HepG2 (cell line): ENCODE measurements at regions of chr9 and their contacts with region 1.

Region 1: GRCh38 chr9:87684627-87685219 is 41.2 kb upstream of the CTSL start:
- DNase-seq: peak; percentile 19
- ATAC-seq: peak; percentile 85
- H3K4me3 ChIP-seq: no peak overlapping the region
- H3K27ac ChIP-seq: no peak overlapping the region
- H3K4me1 ChIP-seq: no peaks in the 10 kb centered on the region
- H3K27me3 ChIP-seq: no peaks in the 10 kb centered on the region
- CTCF ChIP-seq: peak; percentile 74
- EP300 ChIP-seq: no peak
- POLR2A ChIP-seq: no peak
- RAD21 ChIP-seq: 0 out of 2 replicates have a peak, but pooled peaks have one; percentile 37

Region 2: DNA sequence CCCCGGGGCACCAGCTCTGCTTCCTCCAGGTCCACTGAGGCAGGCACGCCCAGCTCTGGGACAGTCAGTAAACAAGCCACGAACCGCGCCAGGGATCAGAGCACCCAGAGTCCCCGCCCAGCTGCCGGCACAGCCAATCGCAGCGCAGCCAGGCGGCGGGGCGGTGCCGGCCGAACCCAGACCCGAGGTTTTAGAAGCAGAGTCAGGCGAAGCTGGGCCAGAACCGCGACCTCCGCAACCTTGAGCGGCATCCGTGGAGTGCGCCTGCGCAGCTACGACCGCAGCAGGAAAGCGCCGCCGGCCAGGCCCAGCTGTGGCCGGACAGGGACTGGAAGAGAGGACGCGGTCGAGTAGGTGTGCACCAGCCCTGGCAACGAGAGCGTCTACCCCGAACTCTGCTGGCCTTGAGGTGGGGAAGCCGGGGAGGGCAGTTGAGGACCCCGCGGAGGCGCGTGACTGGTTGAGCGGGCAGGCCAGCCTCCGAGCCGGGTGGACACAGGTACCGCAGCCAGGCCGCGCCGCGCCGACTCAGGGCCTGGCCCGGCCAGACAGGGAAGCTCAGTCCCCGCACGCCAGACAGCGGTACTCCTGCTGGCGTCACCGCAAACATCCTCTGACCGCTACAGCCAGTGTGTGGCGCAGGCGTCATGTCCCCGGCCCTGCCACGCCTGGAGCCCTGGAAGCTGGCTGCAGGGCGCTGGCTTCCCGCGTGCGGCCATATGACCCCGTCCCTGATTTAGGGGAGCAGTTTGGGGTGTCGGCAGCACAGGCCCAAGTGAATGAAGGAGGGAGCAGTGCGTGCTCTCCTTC is 41.4 kb after region 1 on chr9 and contains the start of gene CTSL:
- CTCF ChIA-PET with region 1: interaction called, 3 read pairs
- POLR2A ChIA-PET with region 1: no interaction called
- in situ Hi-C with region 1: no loop called
- intact Hi-C with region 1: loop called (anchors 5 kb)
- DNase-seq: peak; percentile 76
- ATAC-seq: peak; percentile 95
- H3K4me3 ChIP-seq: peak within 1 kb of the TSS; percentile 45 to 76 (median 70)
- H3K27ac ChIP-seq: peak within 1 kb of the TSS; percentile 52
- H3K4me1 ChIP-seq: peaks cover 14% of the 10 kb centered on the region
- H3K27me3 ChIP-seq: peaks cover 0 to 6% of the 10 kb centered on the region in 2 experiments; a peak in 1 of 5 replicates
- CTCF ChIP-seq: peak; percentile 78
- EP300 ChIP-seq: no peak
- POLR2A ChIP-seq: peak; percentile 76 to 89
- RAD21 ChIP-seq: peak; percentile 36; the same call in 1 of the 2 replicates
- total RNA-seq, gene CTSL: 40.0 and 78.1 TPM in 2 replicates

Region 3: DNA sequence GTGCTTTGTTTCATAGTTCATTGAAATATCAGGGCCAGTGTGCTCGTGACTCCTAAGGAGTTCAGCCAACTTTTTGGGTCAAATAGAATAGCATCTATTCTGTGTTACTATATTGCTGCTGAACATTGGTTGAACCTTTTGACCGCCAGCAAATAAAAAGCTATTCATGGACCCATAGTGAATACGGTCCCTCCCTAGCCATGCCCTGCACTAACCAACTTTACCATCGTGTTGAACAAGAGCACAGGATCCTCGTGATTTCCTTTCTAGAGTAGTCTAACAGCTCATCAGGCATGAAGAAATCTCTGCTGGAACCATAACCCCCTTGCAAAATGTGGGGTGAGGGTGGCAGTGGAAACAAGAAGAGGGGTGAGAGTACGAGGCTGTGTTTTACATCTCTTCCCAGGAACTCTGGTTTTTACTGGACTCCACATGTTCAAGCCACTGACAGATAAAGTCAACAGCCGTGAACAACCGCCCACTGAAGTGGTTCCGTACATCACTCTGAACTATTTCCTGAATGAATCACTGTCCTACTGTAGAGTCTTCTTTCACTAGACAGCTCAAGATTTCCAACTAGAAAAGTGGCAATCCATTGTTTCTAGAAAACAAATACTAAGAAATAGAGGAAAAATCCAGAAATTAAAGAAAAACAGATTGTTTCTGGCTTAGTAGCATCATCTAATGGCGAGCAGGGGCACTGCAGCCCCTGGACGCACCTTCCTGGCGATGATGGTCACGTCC is 127.8 kb after region 1 on chr9:
- CTCF ChIA-PET with region 1: interaction called, 25 read pairs
- POLR2A ChIA-PET with region 1: no interaction called
- in situ Hi-C with region 1: loop called (anchors 5 kb)
- intact Hi-C with region 1: loop called (anchors 1 kb)
- DNase-seq: peak; percentile 4
- ATAC-seq: peak; percentile 76
- H3K4me3 ChIP-seq: no peak overlapping the region
- H3K27ac ChIP-seq: no peak overlapping the region
- H3K4me1 ChIP-seq: no peaks in the 10 kb centered on the region
- H3K27me3 ChIP-seq: no peaks in the 10 kb centered on the region; a peak in 1 of 5 replicates
- CTCF ChIP-seq: peak; percentile 80
- EP300 ChIP-seq: no peak
- POLR2A ChIP-seq: no peak
- RAD21 ChIP-seq: peak; percentile 56; the same call in 1 of the 2 replicates

Region 4: DNA sequence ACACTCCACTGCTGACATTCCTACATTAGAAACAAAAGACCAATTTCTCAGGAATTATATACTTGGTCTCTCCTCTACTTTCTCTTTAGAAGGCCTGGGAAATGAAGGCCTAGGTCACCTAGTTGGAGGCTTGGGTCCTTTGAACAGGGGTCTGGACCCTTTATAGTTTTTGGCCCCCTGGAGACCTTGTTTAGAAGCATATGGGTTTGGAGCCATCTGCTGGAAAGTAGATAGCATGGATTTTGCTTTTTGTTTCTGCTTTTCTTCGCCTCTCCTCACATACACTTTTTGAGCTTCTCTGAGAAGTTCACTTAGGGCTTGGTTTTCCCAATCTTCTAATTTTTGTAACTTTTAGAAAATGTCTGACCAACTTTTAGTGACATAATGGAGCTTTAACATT is 356.7 kb after region 1 on chr9:
- CTCF ChIA-PET with region 1: no interaction called
- POLR2A ChIA-PET with region 1: no interaction called
- in situ Hi-C with region 1: no loop called
- intact Hi-C with region 1: loop called (anchors 10 kb)
- DNase-seq: peak; percentile 4
- ATAC-seq: no peak
- H3K4me3 ChIP-seq: no peak overlapping the region
- H3K27ac ChIP-seq: no peak overlapping the region
- H3K4me1 ChIP-seq: no peaks in the 10 kb centered on the region
- H3K27me3 ChIP-seq: no peaks in the 10 kb centered on the region
- CTCF ChIP-seq: peak; percentile 39; the same call in 1 of the 2 replicates
- EP300 ChIP-seq: no peak
- POLR2A ChIP-seq: no peak
- RAD21 ChIP-seq: no peak

Region 5: DNA sequence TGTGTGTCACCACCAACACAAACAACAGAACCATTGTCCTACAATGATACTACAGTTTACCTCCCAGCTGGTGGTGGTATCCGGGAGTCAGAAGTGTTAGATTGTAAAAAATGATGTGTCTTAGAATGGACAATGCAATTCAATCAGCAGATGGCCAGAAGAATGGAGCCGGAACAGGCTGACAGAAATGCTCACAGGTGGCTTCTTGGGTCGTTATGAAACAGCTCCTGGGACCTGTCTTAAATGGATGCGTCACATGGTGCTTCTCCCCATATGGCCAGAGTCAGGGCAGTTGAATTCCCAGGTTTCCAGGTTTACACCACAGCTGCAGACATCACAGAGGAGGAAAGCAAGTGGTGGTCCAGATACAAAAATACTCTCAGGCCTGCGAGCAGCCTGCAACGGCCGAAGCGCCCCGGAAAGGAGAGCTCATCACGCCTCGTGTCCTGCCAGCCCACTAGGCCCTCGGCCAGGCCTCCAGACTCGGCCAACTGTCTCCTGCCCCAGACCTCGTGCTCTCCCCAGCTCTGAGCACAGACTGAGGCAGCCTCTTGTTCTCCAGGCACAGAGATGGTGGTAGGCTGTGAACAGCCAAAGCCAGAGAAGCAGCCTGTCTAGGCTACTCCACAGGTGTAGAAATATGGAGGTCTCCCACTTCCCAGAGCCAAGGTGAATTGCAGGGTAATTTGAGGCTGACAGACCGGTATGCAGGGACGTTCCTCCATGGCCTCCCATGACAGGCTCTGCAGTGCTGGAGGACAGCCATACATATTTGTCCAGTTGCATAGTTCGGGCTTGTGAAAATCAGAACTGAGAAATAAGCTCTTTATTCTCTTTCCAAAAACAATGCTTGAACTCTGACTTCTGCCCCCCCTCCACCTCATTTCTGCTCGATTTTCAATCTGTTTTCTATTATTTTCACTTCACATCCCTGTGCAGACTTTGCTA is 552.1 kb after region 1 on chr9:
- CTCF ChIA-PET with region 1: no interaction called
- POLR2A ChIA-PET with region 1: no interaction called
- in situ Hi-C with region 1: no loop called
- intact Hi-C with region 1: no loop called
- DNase-seq: no peak
- ATAC-seq: no peak
- H3K4me3 ChIP-seq: no peak overlapping the region
- H3K27ac ChIP-seq: no peak overlapping the region
- H3K4me1 ChIP-seq: no peaks in the 10 kb centered on the region
- H3K27me3 ChIP-seq: peaks cover 0 to 11% of the 10 kb centered on the region in 2 experiments; a peak in 1 of 5 replicates
- CTCF ChIP-seq: no peak
- EP300 ChIP-seq: no peak
- POLR2A ChIP-seq: no peak
- RAD21 ChIP-seq: no peak